Activated naive CD4-positive, alpha-beta T cell treated with anti-CD3 and anti-CD28 coated beads for 36 hours (primary cell): ENCODE measurements at regions of chr22 and their contacts with region 1.

Region 1: GRCh38 chr22:17057959-17058814 is 26.6 kb upstream of the IL17RA start:
- DNase-seq: peak; percentile 70
- H3K4me3 Mint-ChIP-seq: no peak overlapping the region
- H3K27ac Mint-ChIP-seq: no peak overlapping the region
- H3K4me1 Mint-ChIP-seq: peaks cover 5% of the 10 kb centered on the region
- H3K27me3 Mint-ChIP-seq: no peaks in the 10 kb centered on the region

Region 2: DNA sequence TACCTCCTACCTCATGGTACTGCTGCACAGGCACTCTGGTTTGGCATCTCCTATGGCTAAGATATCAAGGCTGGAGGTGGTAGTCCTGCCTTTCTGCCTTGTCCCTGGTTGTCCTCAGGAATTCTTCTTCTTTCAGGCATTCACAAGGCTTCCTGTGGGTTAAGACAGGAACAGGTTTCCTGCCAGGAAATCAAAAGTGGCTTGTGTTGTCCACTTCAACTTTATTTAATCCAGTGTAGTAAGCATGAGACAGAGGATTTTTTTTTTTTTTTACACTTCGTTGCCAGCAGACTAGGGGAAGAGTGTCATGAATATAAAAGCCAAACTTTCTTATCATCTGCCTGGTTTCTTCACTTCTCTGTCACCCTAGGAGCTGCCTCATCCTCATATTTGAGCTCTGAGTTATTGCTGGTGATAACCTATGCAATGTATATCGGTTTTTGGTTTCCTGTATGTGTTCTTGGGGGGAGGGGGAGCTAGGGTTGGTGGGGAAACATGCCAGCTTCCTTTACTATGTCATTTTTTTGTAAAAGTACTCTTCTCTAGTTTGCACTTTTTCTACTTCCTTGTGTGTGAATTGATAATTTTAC is 283.2 kb before region 1 on chr22:
- CTCF ChIA-PET with region 1: interaction called, 3 read pairs
- intact Hi-C with region 1: loop called (anchors 10 kb)
- DNase-seq: no peak
- H3K4me3 Mint-ChIP-seq: no peak overlapping the region
- H3K27ac Mint-ChIP-seq: no peak overlapping the region
- H3K4me1 Mint-ChIP-seq: no peaks in the 10 kb centered on the region
- H3K27me3 Mint-ChIP-seq: peaks cover 5% of the 10 kb centered on the region

Region 3: GRCh38 chr22:16917144-16918003 is 140.8 kb before region 1 on chr22:
- CTCF ChIA-PET with region 1: interaction called, 64 read pairs
- intact Hi-C with region 1: loop called (anchors 1 kb)
- DNase-seq: peak; percentile 81
- H3K4me3 Mint-ChIP-seq: no peak overlapping the region
- H3K27ac Mint-ChIP-seq: no peak overlapping the region
- H3K4me1 Mint-ChIP-seq: no peaks in the 10 kb centered on the region
- H3K27me3 Mint-ChIP-seq: peaks cover 18% of the 10 kb centered on the region

Region 4: GRCh38 chr22:16955678-16956210 is 102.4 kb before region 1 on chr22:
- CTCF ChIA-PET with region 1: no interaction called
- intact Hi-C with region 1: no loop called
- DNase-seq: no peak
- H3K4me3 Mint-ChIP-seq: no peak overlapping the region
- H3K27ac Mint-ChIP-seq: no peak overlapping the region
- H3K4me1 Mint-ChIP-seq: no peaks in the 10 kb centered on the region
- H3K27me3 Mint-ChIP-seq: no peaks in the 10 kb centered on the region

Region 5: GRCh38 chr22:16989915-16990314 is 68.3 kb before region 1 on chr22:
- CTCF ChIA-PET with region 1: interaction called, 17 read pairs
- intact Hi-C with region 1: no loop called
- DNase-seq: no peak
- H3K4me3 Mint-ChIP-seq: no peak overlapping the region
- H3K27ac Mint-ChIP-seq: no peak overlapping the region
- H3K4me1 Mint-ChIP-seq: no peaks in the 10 kb centered on the region
- H3K27me3 Mint-ChIP-seq: peaks cover 8% of the 10 kb centered on the region

Region 6: GRCh38 chr22:17087498-17088131 is 29.4 kb after region 1 on chr22:
- CTCF ChIA-PET with region 1: no interaction called
- intact Hi-C with region 1: no loop called
- DNase-seq: peak; percentile 77
- H3K4me3 Mint-ChIP-seq: peak overlapping the region; percentile 84
- H3K27ac Mint-ChIP-seq: peak overlapping the region; percentile 77
- H3K4me1 Mint-ChIP-seq: peaks cover 66% of the 10 kb centered on the region
- H3K27me3 Mint-ChIP-seq: no peaks in the 10 kb centered on the region

Region 7: GRCh38 chr22:17106785-17107546 is 48.8 kb after region 1 on chr22:
- CTCF ChIA-PET with region 1: no interaction called
- intact Hi-C with region 1: no loop called
- DNase-seq: peak; percentile 67
- H3K4me3 Mint-ChIP-seq: peak overlapping the region; percentile 43
- H3K27ac Mint-ChIP-seq: peak overlapping the region; percentile 63
- H3K4me1 Mint-ChIP-seq: peaks cover 53% of the 10 kb centered on the region
- H3K27me3 Mint-ChIP-seq: no peaks in the 10 kb centered on the region

Region 8: GRCh38 chr22:17121227-17122195 is 63.3 kb after region 1 on chr22 and contains the start of gene TMEM121B:
- CTCF ChIA-PET with region 1: no interaction called
- intact Hi-C with region 1: no loop called
- DNase-seq: peak; percentile 54
- H3K4me3 Mint-ChIP-seq: peak within 1 kb of the TSS; percentile 62
- H3K27ac Mint-ChIP-seq: no peak within 1 kb of the TSS
- H3K4me1 Mint-ChIP-seq: peaks cover 38% of the 10 kb centered on the region
- H3K27me3 Mint-ChIP-seq: peaks cover 11% of the 10 kb centered on the region
- total RNA-seq, gene TMEM121B: 0.19 to 0.22 TPM